ENCODE measurements at regions of chr12 and their contacts with region 1.

Region 1: GRCh38 chr12:89862511-89863179 is 154.0 kb upstream of the ATP2B1 start:
- DNase-seq: peak; percentile 61
- H3K4me3 Mint-ChIP-seq: peak overlapping the region; percentile 67
- H3K27ac Mint-ChIP-seq: peak overlapping the region; percentile 84
- H3K4me1 Mint-ChIP-seq: peaks cover 56% of the 10 kb centered on the region
- H3K27me3 Mint-ChIP-seq: no peaks in the 10 kb centered on the region

Region 2: DNA sequence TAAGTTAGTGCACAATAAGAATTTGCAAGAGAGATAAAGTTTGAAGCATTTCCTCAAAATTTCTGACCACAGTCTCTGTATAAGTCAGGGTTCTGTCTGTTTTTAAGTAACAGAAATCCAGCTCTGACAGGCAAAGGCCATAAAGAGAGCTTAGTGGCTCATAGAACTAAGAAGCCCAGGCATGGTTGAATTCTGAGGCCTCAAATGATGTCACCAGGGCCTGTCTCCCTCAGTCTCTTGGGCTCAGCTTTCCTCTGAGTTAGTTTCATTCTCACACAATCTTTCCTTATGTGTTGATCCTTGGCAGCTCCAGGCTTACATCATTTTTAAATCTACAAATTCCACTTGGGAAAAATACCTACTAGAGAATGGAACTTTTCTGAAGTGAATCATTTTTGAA is 19.4 kb after region 1 on chr12:
- CTCF ChIA-PET with region 1: interaction called, 8 read pairs
- POLR2A ChIA-PET with region 1: interaction called, 27 read pairs
- DNase-seq: no peak
- H3K4me3 Mint-ChIP-seq: no peak overlapping the region
- H3K27ac Mint-ChIP-seq: peak overlapping the region; percentile 88
- H3K4me1 Mint-ChIP-seq: peaks cover 37% of the 10 kb centered on the region
- H3K27me3 Mint-ChIP-seq: no peaks in the 10 kb centered on the region

Region 3: GRCh38 chr12:90058704-90059103 is 196.1 kb after region 1 on chr12:
- CTCF ChIA-PET with region 1: no interaction called
- POLR2A ChIA-PET with region 1: no interaction called
- DNase-seq: no peak
- H3K4me3 Mint-ChIP-seq: no peak overlapping the region
- H3K27ac Mint-ChIP-seq: no peak overlapping the region
- H3K4me1 Mint-ChIP-seq: no peaks in the 10 kb centered on the region
- H3K27me3 Mint-ChIP-seq: no peaks in the 10 kb centered on the region

Measured in activated CD4-positive, alpha-beta memory T cell treated with anti-CD3 and anti-CD28 coated beads, Interleukin-2, amount 10 ng/mL, durations not matched to agents 7 days and 5 days (primary cell).